Head of caudate nucleus (tissue), 42 donors: ENCODE measurements at regions of chr9 and their contacts with region 1.

Region 1: GRCh38 chr9:96619491-96620154 is at the start of gene CDC14B:
- DNase-seq: peak; percentile 87 to 96 (median 94)

Region 2: GRCh38 chr9:96436063-96436455 is 183.6 kb before region 1 on chr9:
- intact Hi-C with region 1: loop called (anchors 10 kb)
- DNase-seq: no peak

Region 3: GRCh38 chr9:96500696-96501632 is 118.7 kb before region 1 on chr9:
- intact Hi-C with region 1: loop called (anchors 5 kb)
- DNase-seq: peak in 1 of 42 donors; percentile 42

Region 4: DNA sequence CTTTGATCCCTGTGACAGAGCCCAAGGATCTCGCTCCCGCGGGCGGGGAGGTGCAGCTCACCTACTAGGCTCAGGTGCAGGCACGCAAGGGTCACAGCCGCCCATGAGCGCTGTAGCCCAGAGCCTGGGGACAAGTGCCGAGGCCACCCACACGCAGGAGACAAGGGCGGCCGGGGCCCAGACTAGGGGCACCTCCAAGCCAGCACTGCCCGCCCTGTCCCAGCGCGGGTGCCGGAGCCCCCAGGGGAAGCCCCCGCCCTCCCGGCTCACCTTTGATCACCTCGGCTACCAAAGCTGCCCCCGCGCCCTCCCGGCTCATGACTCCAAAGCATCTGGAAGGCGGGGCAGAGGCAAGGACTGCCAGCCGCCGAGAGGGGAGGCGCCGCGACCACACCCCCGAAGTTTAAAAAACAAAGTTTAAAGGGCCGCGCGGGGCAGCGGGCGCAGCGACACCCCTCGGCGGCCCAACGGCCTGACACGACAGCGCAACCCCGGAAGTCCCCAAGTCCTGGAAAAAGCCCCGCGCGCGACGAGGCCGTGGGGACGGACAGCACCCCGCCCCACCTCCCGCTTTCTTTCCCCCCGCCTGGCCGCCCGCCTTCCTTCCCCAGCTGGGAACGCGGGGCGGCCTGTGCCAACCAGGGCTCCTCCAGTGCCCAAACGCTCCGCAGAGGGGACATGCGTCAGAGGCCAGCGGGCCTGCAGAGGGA is 53.0 kb before region 1 on chr9:
- intact Hi-C with region 1: loop called (anchors 5 kb)
- DNase-seq: peak; percentile 62 to 94 (median 87)